Activated CD8-positive, alpha-beta T cell treated with anti-CD3 and anti-CD28 coated beads for 36 hours (primary cell): ENCODE measurements at regions of chr12 and their contacts with region 1.

Region 1: DNA sequence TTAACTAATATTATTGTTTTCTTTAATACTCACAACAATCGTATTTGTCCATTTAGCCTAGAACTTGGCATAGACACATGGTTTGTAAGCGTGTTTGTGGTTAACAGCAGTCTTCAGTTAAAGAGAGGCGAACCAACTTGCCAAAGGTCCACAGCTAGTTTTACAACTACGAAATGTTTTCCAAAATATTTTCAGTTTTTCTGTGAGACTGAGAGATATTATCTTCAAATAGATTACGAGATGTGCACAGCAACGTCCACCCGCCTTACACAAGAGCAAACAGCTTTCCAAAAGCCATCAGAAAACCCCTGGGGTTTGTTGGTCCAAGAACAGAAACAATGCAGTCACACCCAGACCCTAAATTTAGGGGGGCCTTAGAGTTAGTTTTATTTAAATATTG is 58.6 kb upstream of the RASSF3 start:
- DNase-seq: no peak
- ATAC-seq: no peak
- H3K4me3 Mint-ChIP-seq: no peak overlapping the region
- H3K27ac Mint-ChIP-seq: no peak overlapping the region
- H3K4me1 Mint-ChIP-seq: peaks cover 3% of the 10 kb centered on the region
- H3K27me3 Mint-ChIP-seq: no peaks in the 10 kb centered on the region
- CTCF ChIP-seq: no peak

Region 2: GRCh38 chr12:64284256-64284655 is 267.4 kb before region 1 on chr12:
- CTCF ChIA-PET with region 1: no interaction called
- POLR2A ChIA-PET with region 1: no interaction called
- intact Hi-C with region 1: no loop called
- DNase-seq: no peak
- ATAC-seq: no peak
- H3K4me3 Mint-ChIP-seq: no peak overlapping the region
- H3K27ac Mint-ChIP-seq: no peak overlapping the region
- H3K4me1 Mint-ChIP-seq: no peaks in the 10 kb centered on the region
- H3K27me3 Mint-ChIP-seq: no peaks in the 10 kb centered on the region
- CTCF ChIP-seq: no peak

Region 3: GRCh38 chr12:64538121-64538520 is 13.6 kb before region 1 on chr12:
- CTCF ChIA-PET with region 1: interaction called, 18 read pairs
- POLR2A ChIA-PET with region 1: interaction called, 3 read pairs
- intact Hi-C with region 1: no loop called
- DNase-seq: no peak
- ATAC-seq: no peak
- H3K4me3 Mint-ChIP-seq: no peak overlapping the region
- H3K27ac Mint-ChIP-seq: no peak overlapping the region
- H3K4me1 Mint-ChIP-seq: no peaks in the 10 kb centered on the region
- H3K27me3 Mint-ChIP-seq: no peaks in the 10 kb centered on the region
- CTCF ChIP-seq: no peak

Region 4: DNA sequence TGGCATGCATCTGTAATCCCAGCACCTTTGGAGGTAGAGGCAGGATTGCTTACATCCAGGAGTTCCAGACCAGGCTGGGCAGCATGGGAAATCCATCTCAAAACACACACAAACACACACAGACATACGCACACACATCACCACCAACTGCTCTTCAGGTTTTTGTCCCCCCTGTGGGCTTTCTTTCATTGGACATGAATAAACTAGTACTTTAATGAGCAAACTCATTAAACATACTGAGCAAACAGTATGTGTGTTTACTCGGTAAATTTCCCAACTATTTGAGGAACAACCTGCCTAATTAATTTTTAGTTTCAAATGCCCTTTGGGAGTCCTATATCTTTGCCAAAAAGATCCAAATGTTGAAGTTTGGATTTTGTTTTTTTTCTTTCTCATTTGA is 48.5 kb after region 1 on chr12:
- CTCF ChIA-PET with region 1: interaction called, 20 read pairs
- POLR2A ChIA-PET with region 1: no interaction called
- intact Hi-C with region 1: no loop called
- DNase-seq: no peak
- ATAC-seq: no peak
- H3K4me3 Mint-ChIP-seq: no peak overlapping the region
- H3K27ac Mint-ChIP-seq: peak overlapping the region; percentile 7
- H3K4me1 Mint-ChIP-seq: peaks cover 28% of the 10 kb centered on the region
- H3K27me3 Mint-ChIP-seq: no peaks in the 10 kb centered on the region
- CTCF ChIP-seq: no peak

Region 5: DNA sequence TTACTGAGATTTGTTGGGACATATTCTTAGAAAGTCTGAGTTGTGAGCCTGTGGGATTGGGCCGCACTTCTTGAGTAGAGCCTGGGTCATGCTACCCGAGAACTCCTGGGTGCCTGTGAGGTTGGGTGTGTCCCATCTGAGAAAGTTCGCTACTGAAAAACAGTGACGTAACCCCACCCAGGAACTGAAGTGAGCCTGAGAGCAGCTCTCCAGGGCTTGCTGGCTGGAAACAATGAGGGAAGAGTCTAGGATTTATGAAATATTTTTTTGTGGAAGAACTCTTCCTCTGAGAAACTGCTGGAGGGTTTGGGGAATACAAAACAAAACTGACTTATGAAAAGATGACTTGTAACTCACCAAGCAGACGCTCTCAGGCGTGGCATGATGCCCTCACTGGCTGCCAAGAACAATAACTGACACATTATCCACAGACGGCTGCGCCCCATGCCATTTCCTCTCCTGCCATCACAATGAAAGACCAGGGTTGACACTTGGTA is 127.8 kb after region 1 on chr12:
- CTCF ChIA-PET with region 1: interaction called, 14 read pairs
- POLR2A ChIA-PET with region 1: no interaction called
- intact Hi-C with region 1: no loop called
- DNase-seq: peak; percentile 83
- ATAC-seq: peak; percentile 68
- H3K4me3 Mint-ChIP-seq: peak overlapping the region; percentile 54
- H3K27ac Mint-ChIP-seq: peak overlapping the region; percentile 88
- H3K4me1 Mint-ChIP-seq: peaks cover 89% of the 10 kb centered on the region
- H3K27me3 Mint-ChIP-seq: no peaks in the 10 kb centered on the region
- CTCF ChIP-seq: no peak

Region 6: GRCh38 chr12:64706306-64706705 is 154.6 kb after region 1 on chr12:
- CTCF ChIA-PET with region 1: interaction called, 22 read pairs
- POLR2A ChIA-PET with region 1: interaction called, 3 read pairs
- intact Hi-C with region 1: no loop called
- DNase-seq: no peak
- ATAC-seq: no peak
- H3K4me3 Mint-ChIP-seq: no peak overlapping the region
- H3K27ac Mint-ChIP-seq: no peak overlapping the region
- H3K4me1 Mint-ChIP-seq: peaks cover 11% of the 10 kb centered on the region
- H3K27me3 Mint-ChIP-seq: no peaks in the 10 kb centered on the region
- CTCF ChIP-seq: no peak